Head of caudate nucleus (tissue), 42 donors: ENCODE measurements at regions of chr2 and their contacts with region 1.

Region 1: GRCh38 chr2:202375609-202376408 is at the start of gene BMPR2:
- DNase-seq: peak; percentile 60 to 94 (median 87)

Region 2: DNA sequence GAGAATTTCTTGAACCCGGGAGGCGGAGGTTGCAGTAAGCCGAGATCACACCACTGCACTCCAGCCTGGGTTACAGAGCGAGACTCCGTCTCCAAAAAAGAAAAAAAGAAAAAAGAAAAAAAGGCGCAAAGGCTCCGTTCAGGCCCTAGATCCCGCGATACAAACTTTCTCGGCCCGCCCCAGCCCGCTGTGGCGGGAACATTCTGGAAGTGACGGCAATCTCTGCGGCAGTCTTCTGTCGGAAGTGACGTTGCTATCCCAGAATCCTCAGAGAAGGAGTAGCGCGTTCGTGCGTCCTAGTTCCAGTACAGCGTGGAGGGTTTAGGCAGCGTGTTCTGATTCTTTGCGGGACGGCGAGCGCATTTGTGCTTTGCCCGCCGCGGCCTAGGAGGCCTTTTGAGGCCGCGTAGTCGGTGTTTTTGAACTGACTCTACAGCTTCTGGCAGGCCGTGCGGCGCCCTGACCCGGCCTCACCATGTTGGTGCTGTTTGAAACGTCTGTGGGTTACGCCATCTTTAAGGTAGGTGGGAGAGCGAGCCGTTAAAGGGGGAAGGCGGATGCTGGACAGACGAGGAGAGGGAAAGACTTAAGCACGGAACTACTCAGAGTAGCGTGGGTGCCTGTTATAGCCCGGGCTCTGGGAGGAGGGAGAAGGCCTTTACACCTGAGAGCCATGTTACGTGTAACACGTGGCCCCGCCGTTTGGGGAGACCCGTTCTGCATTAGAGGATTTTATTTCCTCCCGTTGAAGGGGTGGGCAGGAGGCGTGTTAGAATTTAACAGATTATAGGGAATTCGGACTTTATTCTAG is 110.1 kb before region 1 on chr2 and contains the start of gene NOP58:
- intact Hi-C with region 1: loop called (anchors 10 kb)
- DNase-seq: peak; percentile 82 to 98 (median 94)

Region 3: DNA sequence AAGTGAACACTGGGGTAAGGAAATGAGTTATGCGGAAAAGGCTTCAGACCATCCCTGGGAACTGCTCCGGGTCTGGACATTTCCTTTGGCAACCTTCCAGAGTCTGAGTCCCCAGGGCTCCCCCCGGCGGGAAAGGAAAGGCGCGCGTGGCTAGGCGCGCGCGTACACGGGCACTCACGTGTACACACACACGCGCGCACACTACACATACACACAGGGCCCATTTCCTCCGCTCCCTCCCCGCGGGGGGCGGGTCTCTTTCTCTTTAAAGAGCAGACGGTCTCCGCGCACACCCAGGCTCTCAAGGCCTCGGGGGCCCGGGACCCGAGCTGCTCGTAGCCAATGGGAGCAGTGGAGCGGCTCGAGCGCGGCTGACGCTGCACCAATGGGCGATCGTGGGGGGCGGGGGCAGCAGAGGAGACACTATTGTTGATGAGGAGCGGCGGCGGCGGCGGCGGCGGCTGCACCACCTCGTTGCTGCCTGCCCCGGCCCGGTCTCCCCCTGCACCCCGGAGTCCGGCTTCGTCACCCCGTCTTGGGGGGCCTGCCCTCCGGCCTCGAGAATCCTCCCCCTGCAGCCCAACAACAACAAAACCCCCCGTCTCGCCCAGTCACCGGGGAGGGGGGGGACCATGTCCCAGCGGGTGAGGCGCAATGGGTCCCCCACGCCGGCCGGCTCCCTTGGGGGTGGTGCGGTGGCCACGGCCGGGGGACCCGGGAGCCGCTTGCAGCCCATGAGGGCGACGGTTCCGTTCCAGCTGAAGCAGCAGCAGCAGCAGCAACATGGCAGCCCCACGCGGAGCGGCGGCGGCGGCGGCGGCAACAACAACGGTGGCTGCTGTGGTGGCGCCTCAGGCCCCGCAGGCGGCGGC is 259.0 kb after region 1 on chr2 and contains the start of gene FAM117B:
- intact Hi-C with region 1: loop called (anchors 10 kb)
- DNase-seq: peak; percentile 96 to 100 (median 99)